ENCODE measurements at regions of chr19 and their contacts with region 1.

Region 1: GRCh38 chr19:7652061-7652641 is 15.2 kb downstream of the STXBP2 start:
- DNase-seq: peak; percentile 81 to 94 (median 86)
- ATAC-seq: peak; percentile 99
- H3K4me3 ChIP-seq: peak overlapping the region; percentile 31
- H3K4me3 Mint-ChIP-seq: peak overlapping the region; percentile 77
- H3K27ac ChIP-seq: peak overlapping the region in 1 of 2 donors; percentile 49
- H3K27ac Mint-ChIP-seq: peak overlapping the region; percentile 87
- H3K4me1 ChIP-seq: peaks cover 16% of the 10 kb centered on the region
- H3K4me1 Mint-ChIP-seq: peaks cover 12% of the 10 kb centered on the region
- H3K27me3 ChIP-seq: no peaks in the 10 kb centered on the region
- H3K27me3 Mint-ChIP-seq: no peaks in the 10 kb centered on the region
- CTCF ChIP-seq: peak; percentile 99

Region 2: GRCh38 chr19:7104747-7105447 is 547.3 kb before region 1 on chr19:
- CTCF ChIA-PET with region 1: no interaction called
- POLR2A ChIA-PET with region 1: no interaction called
- intact Hi-C with region 1: loop called in 1 of 2 experiments (anchors 10 kb)
- DNase-seq: peak in 1 of 14 experiments; percentile 10
- ATAC-seq: no peak
- H3K4me3 ChIP-seq: no peak overlapping the region
- H3K4me3 Mint-ChIP-seq: no peak overlapping the region
- H3K27ac ChIP-seq: no peak overlapping the region
- H3K27ac Mint-ChIP-seq: no peak overlapping the region
- H3K4me1 ChIP-seq: peaks cover 10% of the 10 kb centered on the region
- H3K4me1 Mint-ChIP-seq: peaks cover 22% of the 10 kb centered on the region
- H3K27me3 ChIP-seq: no peaks in the 10 kb centered on the region
- H3K27me3 Mint-ChIP-seq: no peaks in the 10 kb centered on the region
- CTCF ChIP-seq: no peak

Region 3: DNA sequence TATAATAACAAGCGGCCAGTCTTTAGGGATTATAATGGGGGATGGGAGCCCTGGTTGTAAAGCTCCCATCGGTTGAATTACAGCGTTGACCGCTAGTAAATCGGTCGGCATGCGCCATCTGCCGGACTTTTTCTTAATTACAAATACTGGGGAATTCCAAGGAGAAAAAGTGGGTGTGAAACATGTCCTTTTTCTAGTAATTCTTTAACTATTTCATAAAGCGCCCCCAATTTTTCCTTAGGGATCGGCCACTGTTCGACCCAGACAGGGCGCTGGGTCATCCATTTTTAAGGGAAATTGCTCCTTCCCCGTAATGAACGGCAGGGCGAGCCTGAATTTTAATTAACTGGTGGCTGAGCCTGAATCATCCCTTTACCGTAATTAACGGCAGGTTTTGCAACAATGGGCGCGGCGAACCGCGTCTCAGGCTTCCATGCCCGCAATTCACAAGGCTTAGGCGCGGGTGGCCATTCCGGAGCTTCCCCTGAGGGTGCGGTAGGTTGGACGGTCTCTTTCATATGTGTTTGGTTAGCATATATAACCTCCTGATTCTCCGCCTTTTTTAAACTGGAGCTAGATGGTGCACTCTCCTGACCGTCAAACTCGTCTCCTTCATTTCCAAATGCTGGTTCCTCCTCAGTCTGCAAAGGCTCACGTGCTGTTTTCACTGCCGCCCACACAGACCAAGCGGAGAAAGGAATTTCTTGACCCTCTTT is 147.6 kb after region 1 on chr19:
- CTCF ChIA-PET with region 1: interaction called, 4 read pairs
- POLR2A ChIA-PET with region 1: no interaction called
- intact Hi-C with region 1: loop called in 1 of 2 experiments (anchors 1 kb)
- DNase-seq: peak; percentile 17 to 81 (median 48)
- ATAC-seq: no peak
- H3K4me3 ChIP-seq: no peak overlapping the region
- H3K4me3 Mint-ChIP-seq: no peak overlapping the region
- H3K27ac ChIP-seq: no peak overlapping the region
- H3K27ac Mint-ChIP-seq: no peak overlapping the region
- H3K4me1 ChIP-seq: peaks cover 9% of the 10 kb centered on the region
- H3K4me1 Mint-ChIP-seq: peaks cover 6% of the 10 kb centered on the region
- H3K27me3 ChIP-seq: peaks cover 7 to 10% of the 10 kb centered on the region in 2 experiments
- H3K27me3 Mint-ChIP-seq: peaks cover 33% of the 10 kb centered on the region
- CTCF ChIP-seq: peak; percentile 76

Region 4: DNA sequence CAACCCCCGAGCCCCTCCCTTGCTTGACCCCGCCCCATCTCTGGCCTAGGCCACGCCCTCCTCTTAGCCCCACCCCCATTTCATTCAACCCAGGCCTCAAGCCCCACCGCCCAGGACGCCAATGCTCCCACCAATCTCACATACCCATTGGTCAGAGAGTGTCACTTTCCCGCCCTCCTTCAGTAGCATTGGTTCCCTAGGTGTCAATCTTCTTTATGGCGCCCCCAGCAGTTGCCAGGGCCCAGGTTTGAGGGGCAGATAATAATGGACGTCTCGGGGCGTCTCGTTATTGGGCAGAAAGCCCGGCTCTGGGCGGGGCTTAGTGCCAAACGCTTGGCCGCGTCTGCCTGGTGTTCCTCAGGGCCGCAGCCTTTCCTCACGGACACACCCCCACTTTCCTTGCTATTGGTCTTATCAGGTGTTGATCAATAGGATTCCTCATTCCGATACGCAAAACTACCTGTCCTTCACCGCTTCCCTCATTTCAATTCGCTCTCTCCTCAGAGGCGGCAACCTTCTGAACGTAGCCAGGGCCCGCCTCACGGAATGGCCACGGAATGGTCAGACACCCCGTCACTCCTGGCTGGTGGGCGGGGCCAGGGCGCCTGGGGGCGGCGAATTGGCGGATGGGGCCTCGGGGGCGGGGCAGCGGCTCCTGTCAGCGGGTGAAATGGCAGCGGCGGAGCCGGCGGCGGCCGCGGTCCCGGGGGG is 177.6 kb after region 1 on chr19 and contains the start of gene EVI5L:
- CTCF ChIA-PET with region 1: no interaction called
- POLR2A ChIA-PET with region 1: no interaction called
- intact Hi-C with region 1: loop called in 1 of 2 experiments (anchors 1 kb)
- DNase-seq: peak; percentile 99 to 100 (median 100)
- ATAC-seq: peak; percentile 82
- H3K4me3 ChIP-seq: peak within 1 kb of the TSS; percentile 55
- H3K4me3 Mint-ChIP-seq: peak within 1 kb of the TSS; percentile 89
- H3K27ac ChIP-seq: peak within 1 kb of the TSS in 1 of 2 donors; percentile 45
- H3K27ac Mint-ChIP-seq: peak within 1 kb of the TSS; percentile 64
- H3K4me1 ChIP-seq: peaks cover 30% of the 10 kb centered on the region
- H3K4me1 Mint-ChIP-seq: peaks cover 11% of the 10 kb centered on the region
- H3K27me3 ChIP-seq: no peaks in the 10 kb centered on the region
- H3K27me3 Mint-ChIP-seq: no peaks in the 10 kb centered on the region
- CTCF ChIP-seq: no peak
- total RNA-seq, gene EVI5L: 5.2 to 6.0 TPM